PC-3 (cell line): ENCODE measurements at regions of chr5 and their contacts with region 1.

Region 1: DNA sequence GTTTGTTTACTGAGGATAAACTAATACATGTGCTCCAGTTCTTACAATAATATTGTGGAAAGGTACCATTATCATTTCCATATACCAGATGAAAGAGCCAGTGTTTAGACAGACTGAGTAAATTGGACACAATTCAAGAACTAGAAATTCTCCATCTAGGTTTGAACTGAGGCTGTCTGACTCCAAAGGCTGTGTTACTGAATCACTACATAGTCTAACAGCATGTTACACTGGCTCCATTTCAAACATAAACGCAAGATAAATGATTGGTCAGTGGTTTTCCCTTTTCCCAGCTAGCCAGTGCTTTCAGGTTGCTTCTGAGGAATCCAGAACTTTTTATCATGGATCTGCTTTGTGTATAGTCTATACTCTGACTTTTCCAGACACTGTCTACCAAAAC is 8.1 kb downstream of the SPDL1 start:
- DNase-seq: peak; percentile 60
- ATAC-seq: peak; percentile 48
- H3K4me3 ChIP-seq: no peak overlapping the region
- H3K27ac ChIP-seq: peak overlapping the region; percentile 93
- H3K4me1 ChIP-seq: peaks cover 47% of the 10 kb centered on the region
- H3K27me3 ChIP-seq: no peaks in the 10 kb centered on the region
- CTCF ChIP-seq: no peak

Region 2: DNA sequence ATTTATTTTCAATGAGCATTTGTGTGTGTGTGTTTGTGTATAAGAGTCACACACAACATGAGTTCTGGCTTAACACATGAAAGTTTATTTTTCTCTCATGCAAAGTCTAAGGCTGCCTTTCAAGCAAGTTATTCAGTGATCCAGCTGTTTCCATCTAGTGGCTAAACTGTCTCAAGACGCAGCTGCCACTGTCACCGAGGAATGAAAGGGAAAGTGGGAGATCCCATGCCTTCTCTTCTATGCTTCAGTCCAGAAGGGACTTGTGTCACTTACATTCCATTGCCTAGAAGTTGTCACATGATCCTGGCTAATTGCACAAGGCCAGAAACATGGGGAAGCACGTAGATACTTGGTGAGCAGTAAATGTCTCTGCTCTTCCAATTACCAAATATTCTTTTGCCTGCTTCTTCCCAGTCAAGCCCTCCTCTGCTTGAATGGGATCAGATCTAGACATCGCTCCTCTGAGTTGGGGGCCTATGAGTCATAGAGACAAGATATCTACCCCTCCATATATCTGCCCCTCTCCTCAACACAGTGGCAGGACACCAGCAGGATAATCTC is 260.3 kb before region 1 on chr5:
- CTCF ChIA-PET with region 1: no interaction called
- POLR2A ChIA-PET with region 1: no interaction called
- intact Hi-C with region 1: no loop called
- DNase-seq: peak; percentile 16
- ATAC-seq: no peak; the same call in 1 of the 2 replicates
- H3K4me3 ChIP-seq: no peak overlapping the region
- H3K27ac ChIP-seq: no peak overlapping the region
- H3K4me1 ChIP-seq: no peaks in the 10 kb centered on the region
- H3K27me3 ChIP-seq: peaks cover 49% of the 10 kb centered on the region
- CTCF ChIP-seq: 0 out of 2 replicates have a peak, but pooled peaks have one; percentile 23

Region 3: DNA sequence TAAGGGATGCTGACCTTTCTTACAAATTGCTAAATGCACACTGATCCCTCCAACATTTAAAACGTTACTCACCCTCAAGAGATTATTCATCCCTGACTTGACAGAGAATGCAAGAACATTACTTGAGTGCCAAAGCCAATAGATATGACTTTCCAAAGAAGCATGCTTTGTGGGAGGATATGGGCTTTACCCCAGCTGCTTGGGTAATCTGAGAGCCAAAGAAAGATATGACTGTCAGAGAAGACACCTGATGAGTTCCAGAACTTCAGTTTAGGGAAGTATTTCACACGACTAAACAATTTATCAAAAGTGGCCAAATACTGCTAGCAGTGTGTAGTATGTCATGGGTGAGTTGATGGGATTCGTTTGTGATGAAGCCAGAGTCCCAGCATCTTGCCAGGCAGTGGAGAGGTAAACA is 15.4 kb before region 1 on chr5:
- CTCF ChIA-PET with region 1: no interaction called
- POLR2A ChIA-PET with region 1: no interaction called
- intact Hi-C with region 1: no loop called
- DNase-seq: peak; percentile 78
- ATAC-seq: peak; percentile 57
- H3K4me3 ChIP-seq: no peak overlapping the region
- H3K27ac ChIP-seq: no peak overlapping the region
- H3K4me1 ChIP-seq: peaks cover 13% of the 10 kb centered on the region
- H3K27me3 ChIP-seq: peaks cover 5% of the 10 kb centered on the region
- CTCF ChIP-seq: no peak

Region 4: GRCh38 chr5:169812786-169813185 is 221.2 kb after region 1 on chr5:
- CTCF ChIA-PET with region 1: no interaction called
- POLR2A ChIA-PET with region 1: no interaction called
- intact Hi-C with region 1: no loop called
- DNase-seq: no peak
- ATAC-seq: no peak
- H3K4me3 ChIP-seq: no peak overlapping the region
- H3K27ac ChIP-seq: no peak overlapping the region
- H3K4me1 ChIP-seq: no peaks in the 10 kb centered on the region
- H3K27me3 ChIP-seq: no peaks in the 10 kb centered on the region
- CTCF ChIP-seq: no peak

Region 5: DNA sequence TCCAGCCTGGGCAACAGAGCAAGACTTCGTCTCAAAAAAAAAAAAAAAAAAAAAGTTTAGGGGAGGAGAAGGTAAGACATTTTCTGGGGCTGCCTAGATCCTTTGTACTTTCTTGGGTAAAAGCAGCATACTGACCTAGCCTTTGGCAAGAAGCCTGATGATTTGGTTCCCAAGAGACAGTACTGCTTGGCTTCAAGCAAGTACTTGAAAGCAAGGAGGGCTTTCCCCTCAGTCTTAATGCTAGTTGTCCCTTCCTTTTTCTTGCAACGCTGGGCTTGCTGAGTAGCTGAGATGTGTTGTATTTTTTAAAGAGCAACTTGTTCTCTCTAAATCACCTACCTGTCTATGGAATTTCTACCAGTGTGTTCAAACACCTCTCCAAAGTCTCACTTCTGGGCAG is 312.4 kb after region 1 on chr5:
- CTCF ChIA-PET with region 1: no interaction called
- POLR2A ChIA-PET with region 1: no interaction called
- intact Hi-C with region 1: no loop called
- DNase-seq: no peak
- ATAC-seq: no peak
- H3K4me3 ChIP-seq: no peak overlapping the region
- H3K27ac ChIP-seq: no peak overlapping the region
- H3K4me1 ChIP-seq: no peaks in the 10 kb centered on the region
- H3K27me3 ChIP-seq: no peaks in the 10 kb centered on the region
- CTCF ChIP-seq: no peak

Region 6: GRCh38 chr5:171387345-171387969 is 1795.8 kb after region 1 on chr5 and contains the start of gene NPM1:
- CTCF ChIA-PET with region 1: no interaction called
- POLR2A ChIA-PET with region 1: no interaction called
- intact Hi-C with region 1: loop called (anchors 5 kb)
- DNase-seq: peak; percentile 99
- ATAC-seq: peak; percentile 81
- H3K4me3 ChIP-seq: peak within 1 kb of the TSS; percentile 85
- H3K27ac ChIP-seq: peak within 1 kb of the TSS; percentile 46
- H3K4me1 ChIP-seq: peaks cover 27% of the 10 kb centered on the region
- H3K27me3 ChIP-seq: no peaks in the 10 kb centered on the region
- CTCF ChIP-seq: no peak
- total RNA-seq, gene NPM1: 2,251 and 2,265 TPM in 2 replicates